CD4-positive, alpha-beta memory T cell (primary cell): ENCODE measurements at regions of chr20 and their contacts with region 1.

Region 1: GRCh38 chr20:50115591-50116372 is 2.8 kb upstream of the UBE2V1 start:
- DNase-seq: peak; percentile 88 to 93 (median 89)
- H3K4me3 ChIP-seq: peak overlapping the region; percentile 39 to 52
- H3K4me3 Mint-ChIP-seq: peak overlapping the region; percentile 81 to 95 (median 90)
- H3K27ac ChIP-seq: peak overlapping the region; percentile 59
- H3K27ac Mint-ChIP-seq: peak overlapping the region; percentile 74 to 97 (median 97)
- H3K4me1 ChIP-seq: peaks cover 46% of the 10 kb centered on the region
- H3K4me1 Mint-ChIP-seq: peaks cover 42 to 58% (median 50%) of the 10 kb centered on the region in 4 donors
- H3K27me3 ChIP-seq: no peaks in the 10 kb centered on the region
- H3K27me3 Mint-ChIP-seq: no peaks in the 10 kb centered on the region

Region 2: DNA sequence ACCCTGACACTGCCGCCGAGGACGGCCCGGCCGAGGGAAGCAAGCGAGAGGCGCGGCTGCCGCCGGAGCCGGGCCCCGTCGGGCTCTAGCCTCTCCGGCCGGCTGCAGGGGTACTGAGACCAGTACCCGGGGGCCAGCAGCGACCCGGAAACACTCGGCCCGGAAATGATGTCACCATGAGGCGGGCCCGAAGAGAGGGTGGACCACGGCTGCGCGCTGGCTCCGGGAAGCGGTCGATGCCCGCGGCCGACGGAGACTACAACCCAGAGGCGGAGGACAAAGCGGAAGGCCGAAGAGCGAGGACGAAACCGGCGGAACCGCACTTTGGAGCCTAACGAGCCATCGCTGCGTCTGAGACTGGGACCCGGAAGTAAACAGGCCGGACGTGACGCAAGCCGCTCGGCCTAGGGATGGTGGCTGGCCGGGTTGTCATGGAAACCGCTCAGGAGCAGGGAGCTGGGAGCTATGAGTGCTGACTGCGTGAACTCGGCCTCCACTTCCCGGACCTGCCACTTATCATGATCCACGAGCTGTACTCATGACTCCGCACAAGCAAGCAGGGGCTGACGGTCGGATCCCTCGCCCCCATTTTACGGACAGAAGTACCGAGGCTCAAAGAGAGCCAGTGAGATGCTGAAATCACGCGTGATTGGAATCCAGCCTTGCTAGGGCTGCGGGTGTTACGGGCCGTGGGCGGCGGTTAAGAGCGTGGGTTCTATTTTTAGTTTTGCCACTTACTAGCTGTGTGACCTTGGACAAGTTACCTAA is 200.2 kb before region 1 on chr20 and contains the start of gene SPATA2:
- CTCF ChIA-PET with region 1: no interaction called
- POLR2A ChIA-PET with region 1: no interaction called
- intact Hi-C with region 1: loop called (anchors 1 kb)
- DNase-seq: peak; percentile 93 to 97 (median 94)
- H3K4me3 ChIP-seq: peak within 1 kb of the TSS; percentile 85 to 99
- H3K4me3 Mint-ChIP-seq: peak within 1 kb of the TSS; percentile 98 to 99 (median 99)
- H3K27ac ChIP-seq: peak within 1 kb of the TSS; percentile 97
- H3K27ac Mint-ChIP-seq: peak within 1 kb of the TSS; percentile 98 to 100 (median 100)
- H3K4me1 ChIP-seq: peaks cover 24% of the 10 kb centered on the region
- H3K4me1 Mint-ChIP-seq: peaks cover 20 to 47% (median 33%) of the 10 kb centered on the region in 4 donors
- H3K27me3 ChIP-seq: no peaks in the 10 kb centered on the region
- H3K27me3 Mint-ChIP-seq: peaks cover 0 to 2% of the 10 kb centered on the region in 2 donors
- total RNA-seq, gene SPATA2: 8.7 to 9.3 TPM

Region 3: GRCh38 chr20:50085452-50086365 is 30.1 kb before region 1 on chr20:
- CTCF ChIA-PET with region 1: interaction called, 35 read pairs
- POLR2A ChIA-PET with region 1: interaction called, 5 read pairs
- intact Hi-C with region 1: no loop called
- DNase-seq: peak; percentile 39 to 53 (median 47)
- H3K4me3 ChIP-seq: peak overlapping the region in 1 of 2 donors; percentile 17
- H3K4me3 Mint-ChIP-seq: peak overlapping the region; percentile 82 to 91 (median 84)
- H3K27ac ChIP-seq: peak overlapping the region; percentile 27
- H3K27ac Mint-ChIP-seq: peak overlapping the region; percentile 44 to 92 (median 77)
- H3K4me1 ChIP-seq: peaks cover 17% of the 10 kb centered on the region
- H3K4me1 Mint-ChIP-seq: peaks cover 18 to 40% (median 28%) of the 10 kb centered on the region in 4 donors
- H3K27me3 ChIP-seq: no peaks in the 10 kb centered on the region
- H3K27me3 Mint-ChIP-seq: no peaks in the 10 kb centered on the region

Region 4: DNA sequence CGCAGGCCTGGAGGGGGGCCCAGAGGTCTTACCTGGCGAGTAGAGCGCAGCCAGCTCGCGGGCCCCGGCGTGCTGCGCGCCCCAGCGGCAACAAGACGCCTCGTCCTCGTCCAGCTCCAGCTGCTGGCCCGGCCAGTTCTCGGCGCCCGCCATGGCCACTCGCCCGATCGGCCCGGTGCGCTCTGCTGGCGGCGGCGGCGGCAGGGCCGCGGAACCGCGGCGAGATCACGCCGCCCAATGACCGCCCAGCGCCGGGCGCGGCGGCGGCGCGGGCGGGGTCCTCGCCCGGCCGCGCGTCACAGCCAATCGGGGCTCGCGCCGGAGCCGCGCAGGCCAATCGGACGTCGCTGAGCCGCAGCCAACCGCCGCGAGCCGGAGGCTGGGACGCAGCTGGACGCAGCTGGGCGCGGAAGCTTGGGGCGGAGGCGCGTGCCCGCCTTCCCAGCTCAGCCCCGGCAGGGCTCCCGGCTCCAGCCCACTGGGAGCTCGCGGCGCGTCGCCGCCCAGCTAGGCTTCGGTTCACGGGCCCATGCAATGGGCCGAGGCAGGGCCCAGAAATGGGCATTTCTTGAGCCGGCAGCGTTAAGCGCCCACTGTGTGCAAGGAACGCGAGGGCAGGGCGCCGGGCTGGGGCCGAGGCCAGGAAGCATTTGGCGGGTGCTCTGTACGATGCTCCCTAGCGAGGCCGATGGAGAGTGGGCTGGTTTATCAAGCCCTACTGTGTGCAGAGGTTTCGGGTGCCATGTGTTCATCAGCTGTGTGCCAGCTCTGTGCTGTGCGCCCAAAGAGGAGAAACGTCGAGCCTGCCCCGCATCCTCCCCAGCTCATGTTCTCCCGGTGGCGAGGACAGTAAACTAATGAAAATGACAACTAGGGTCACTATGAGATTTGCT is 37.9 kb after region 1 on chr20 and contains the start of gene PEDS1:
- CTCF ChIA-PET with region 1: interaction called, 70 read pairs
- POLR2A ChIA-PET with region 1: interaction called, 76 read pairs
- intact Hi-C with region 1: no loop called
- DNase-seq: peak; percentile 77 to 86 (median 82)
- H3K4me3 ChIP-seq: peak within 1 kb of the TSS; percentile 83 to 87
- H3K4me3 Mint-ChIP-seq: peak within 1 kb of the TSS; percentile 87 to 94 (median 90)
- H3K27ac ChIP-seq: peak within 1 kb of the TSS; percentile 81
- H3K27ac Mint-ChIP-seq: peak within 1 kb of the TSS; percentile 93 to 96 (median 95)
- H3K4me1 ChIP-seq: peaks cover 50% of the 10 kb centered on the region
- H3K4me1 Mint-ChIP-seq: peaks cover 33 to 53% (median 42%) of the 10 kb centered on the region in 4 donors
- H3K27me3 ChIP-seq: no peaks in the 10 kb centered on the region
- H3K27me3 Mint-ChIP-seq: no peaks in the 10 kb centered on the region
- total RNA-seq, gene PEDS1: 16.8 TPM

Region 5: GRCh38 chr20:50460460-50461267 is 344.9 kb after region 1 on chr20:
- CTCF ChIA-PET with region 1: interaction called, 4 read pairs
- POLR2A ChIA-PET with region 1: interaction called, 4 read pairs
- intact Hi-C with region 1: loop called (anchors 5 kb)
- DNase-seq: peak; percentile 70 to 80 (median 76)
- H3K4me3 ChIP-seq: no peak overlapping the region
- H3K4me3 Mint-ChIP-seq: no peak overlapping the region
- H3K27ac ChIP-seq: no peak overlapping the region
- H3K27ac Mint-ChIP-seq: peak overlapping the region in 2 of 7 donors; percentile 15 to 37
- H3K4me1 ChIP-seq: peaks cover 8% of the 10 kb centered on the region
- H3K4me1 Mint-ChIP-seq: peaks cover 0 to 5% (median 4%) of the 10 kb centered on the region in 4 donors
- H3K27me3 ChIP-seq: no peaks in the 10 kb centered on the region
- H3K27me3 Mint-ChIP-seq: peaks cover 2 to 10% of the 10 kb centered on the region in 2 donors